Naive thymus-derived CD4-positive, alpha-beta T cell (primary cell): ENCODE measurements at regions of chr5 and their contacts with region 1.

Region 1: DNA sequence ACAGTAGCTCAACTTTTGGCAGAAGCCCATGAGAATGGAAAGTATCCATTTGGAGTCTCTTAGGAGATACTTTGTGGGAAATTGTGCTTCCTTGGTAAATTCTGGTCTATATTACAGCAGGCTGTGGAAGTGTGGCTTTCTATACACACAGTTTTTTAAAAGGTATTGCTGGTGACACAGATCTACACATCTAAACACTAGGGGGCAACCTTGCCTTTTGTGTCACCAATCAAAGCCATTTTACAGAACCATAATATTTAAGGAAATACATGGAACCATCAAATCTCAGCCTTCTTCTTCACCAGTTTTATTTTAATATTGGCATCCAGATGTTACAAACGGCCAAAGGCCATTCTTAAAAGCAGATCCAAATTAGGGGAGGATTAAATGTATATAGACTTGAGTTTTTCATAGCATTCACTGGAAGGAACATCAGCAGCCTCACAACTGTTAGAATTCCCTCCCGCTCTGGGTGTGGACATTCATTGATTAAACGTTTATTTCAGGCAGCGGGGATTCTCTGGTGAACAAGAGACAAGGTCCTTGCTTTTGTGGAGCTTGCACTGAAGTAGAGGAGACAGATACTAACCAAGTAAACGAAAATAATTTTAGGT is 132.4 kb upstream of the EPB41L4A start:
- DNase-seq: peak in 7 of 9 donors; percentile 23 to 67 (median 48)
- ATAC-seq: peak; percentile 71
- H3K4me3 ChIP-seq: no peak overlapping the region
- H3K4me3 Mint-ChIP-seq: no peak overlapping the region
- H3K27ac ChIP-seq: no peak overlapping the region
- H3K27ac Mint-ChIP-seq: no peak overlapping the region
- H3K4me1 ChIP-seq: no peaks in the 10 kb centered on the region
- H3K4me1 Mint-ChIP-seq: peaks cover 0 to 4% (median 0%) of the 10 kb centered on the region in 7 donors
- H3K27me3 ChIP-seq: no peaks in the 10 kb centered on the region
- H3K27me3 Mint-ChIP-seq: peaks cover 0 to 16% (median 5%) of the 10 kb centered on the region in 5 donors

Region 2: GRCh38 chr5:112174959-112175594 is 376.4 kb before region 1 on chr5:
- CTCF ChIA-PET with region 1: no interaction called
- POLR2A ChIA-PET with region 1: no interaction called
- intact Hi-C with region 1: loop called in 1 of 2 experiments (anchors 10 kb)
- DNase-seq: peak in 5 of 9 donors; percentile 19 to 33 (median 26)
- ATAC-seq: peak; percentile 66
- H3K4me3 ChIP-seq: no peak overlapping the region
- H3K4me3 Mint-ChIP-seq: no peak overlapping the region
- H3K27ac ChIP-seq: no peak overlapping the region
- H3K27ac Mint-ChIP-seq: no peak overlapping the region
- H3K4me1 ChIP-seq: peaks cover 0 to 3% of the 10 kb centered on the region in 2 donors
- H3K4me1 Mint-ChIP-seq: peaks cover 0 to 7% (median 2%) of the 10 kb centered on the region in 7 donors
- H3K27me3 ChIP-seq: no peaks in the 10 kb centered on the region
- H3K27me3 Mint-ChIP-seq: peaks cover 8 to 27% (median 20%) of the 10 kb centered on the region in 5 donors

Region 3: DNA sequence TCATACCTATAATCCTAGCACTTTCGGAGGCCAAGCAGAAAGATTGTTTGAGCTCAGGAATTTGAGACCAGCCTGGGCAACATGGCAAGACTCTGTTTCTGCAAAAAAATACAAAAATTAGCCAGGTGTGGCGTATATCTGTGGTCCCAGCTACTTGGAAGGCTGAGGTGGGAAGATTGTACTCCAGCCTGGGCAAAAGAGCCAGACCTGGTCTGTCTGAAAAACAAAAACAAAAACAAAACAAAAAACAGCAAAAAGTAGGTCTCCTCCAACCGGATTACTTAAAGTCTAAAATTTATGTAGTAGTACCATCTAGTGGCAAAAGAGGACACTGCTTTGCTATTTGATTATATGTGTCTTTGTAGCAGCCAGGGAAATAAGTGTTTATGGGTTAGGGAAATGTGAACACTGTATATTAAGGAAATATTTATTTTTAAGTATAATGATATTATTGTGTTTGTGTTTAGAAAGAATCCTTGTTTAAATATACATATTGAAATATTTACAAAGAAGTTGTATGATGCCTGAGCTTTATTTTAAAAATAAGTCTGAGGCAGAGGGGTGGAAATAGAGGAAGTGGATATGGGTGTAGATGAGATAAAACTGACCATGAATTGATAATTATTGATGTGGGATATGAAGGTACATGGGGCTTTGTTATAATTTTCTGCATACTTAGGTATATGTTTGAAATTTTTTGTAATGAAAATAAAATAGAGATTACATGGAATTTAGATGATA is 206.1 kb after region 1 on chr5:
- CTCF ChIA-PET with region 1: interaction called, 63 read pairs
- POLR2A ChIA-PET with region 1: no interaction called
- intact Hi-C with region 1: loop called (anchors 1 kb)
- DNase-seq: peak in 7 of 9 donors; percentile 14 to 64 (median 52)
- ATAC-seq: peak; percentile 88
- H3K4me3 ChIP-seq: no peak overlapping the region
- H3K4me3 Mint-ChIP-seq: no peak overlapping the region
- H3K27ac ChIP-seq: no peak overlapping the region
- H3K27ac Mint-ChIP-seq: peak overlapping the region in 5 of 9 donors; percentile 36 to 82 (median 58)
- H3K4me1 ChIP-seq: no peaks in the 10 kb centered on the region
- H3K4me1 Mint-ChIP-seq: peaks cover 3 to 25% (median 18%) of the 10 kb centered on the region in 7 donors
- H3K27me3 ChIP-seq: no peaks in the 10 kb centered on the region
- H3K27me3 Mint-ChIP-seq: no peaks in the 10 kb centered on the region

Region 4: GRCh38 chr5:112848116-112848811 is 296.7 kb after region 1 on chr5:
- CTCF ChIA-PET with region 1: no interaction called
- POLR2A ChIA-PET with region 1: no interaction called
- intact Hi-C with region 1: loop called (anchors 1 kb)
- DNase-seq: peak in 7 of 9 donors; percentile 8 to 51 (median 40)
- ATAC-seq: peak; percentile 97
- H3K4me3 ChIP-seq: no peak overlapping the region
- H3K4me3 Mint-ChIP-seq: peak overlapping the region in 2 of 10 donors; percentile 16 to 41
- H3K27ac ChIP-seq: no peak overlapping the region
- H3K27ac Mint-ChIP-seq: peak overlapping the region in 3 of 9 donors; percentile 53 to 58 (median 53)
- H3K4me1 ChIP-seq: no peaks in the 10 kb centered on the region
- H3K4me1 Mint-ChIP-seq: peaks cover 4 to 8% (median 6%) of the 10 kb centered on the region in 7 donors
- H3K27me3 ChIP-seq: no peaks in the 10 kb centered on the region
- H3K27me3 Mint-ChIP-seq: peaks cover 0 to 20% (median 5%) of the 10 kb centered on the region in 5 donors

Region 5: GRCh38 chr5:112968411-112969106 is 417.0 kb after region 1 on chr5:
- CTCF ChIA-PET with region 1: no interaction called
- POLR2A ChIA-PET with region 1: no interaction called
- intact Hi-C with region 1: loop called in 1 of 2 experiments (anchors 1 kb)
- DNase-seq: no peak
- ATAC-seq: no peak
- H3K4me3 ChIP-seq: no peak overlapping the region
- H3K4me3 Mint-ChIP-seq: no peak overlapping the region
- H3K27ac ChIP-seq: no peak overlapping the region
- H3K27ac Mint-ChIP-seq: no peak overlapping the region
- H3K4me1 ChIP-seq: no peaks in the 10 kb centered on the region
- H3K4me1 Mint-ChIP-seq: peaks cover 0 to 21% (median 7%) of the 10 kb centered on the region in 7 donors
- H3K27me3 ChIP-seq: no peaks in the 10 kb centered on the region
- H3K27me3 Mint-ChIP-seq: no peaks in the 10 kb centered on the region

Region 6: GRCh38 chr5:113606298-113607134 is 1055.0 kb after region 1 on chr5:
- CTCF ChIA-PET with region 1: no interaction called
- POLR2A ChIA-PET with region 1: no interaction called
- intact Hi-C with region 1: loop called (anchors 1 to 2 kb)
- DNase-seq: peak in 8 of 9 donors; percentile 29 to 68 (median 56)
- ATAC-seq: peak; percentile 89
- H3K4me3 ChIP-seq: no peak overlapping the region
- H3K4me3 Mint-ChIP-seq: no peak overlapping the region
- H3K27ac ChIP-seq: no peak overlapping the region
- H3K27ac Mint-ChIP-seq: no peak overlapping the region
- H3K4me1 ChIP-seq: no peaks in the 10 kb centered on the region
- H3K4me1 Mint-ChIP-seq: peaks cover 4 to 10% (median 6%) of the 10 kb centered on the region in 7 donors
- H3K27me3 ChIP-seq: no peaks in the 10 kb centered on the region
- H3K27me3 Mint-ChIP-seq: peaks cover 13 to 38% (median 27%) of the 10 kb centered on the region in 5 donors